ENCODE measurements at regions of chr10 and their contacts with region 1.

Region 1: DNA sequence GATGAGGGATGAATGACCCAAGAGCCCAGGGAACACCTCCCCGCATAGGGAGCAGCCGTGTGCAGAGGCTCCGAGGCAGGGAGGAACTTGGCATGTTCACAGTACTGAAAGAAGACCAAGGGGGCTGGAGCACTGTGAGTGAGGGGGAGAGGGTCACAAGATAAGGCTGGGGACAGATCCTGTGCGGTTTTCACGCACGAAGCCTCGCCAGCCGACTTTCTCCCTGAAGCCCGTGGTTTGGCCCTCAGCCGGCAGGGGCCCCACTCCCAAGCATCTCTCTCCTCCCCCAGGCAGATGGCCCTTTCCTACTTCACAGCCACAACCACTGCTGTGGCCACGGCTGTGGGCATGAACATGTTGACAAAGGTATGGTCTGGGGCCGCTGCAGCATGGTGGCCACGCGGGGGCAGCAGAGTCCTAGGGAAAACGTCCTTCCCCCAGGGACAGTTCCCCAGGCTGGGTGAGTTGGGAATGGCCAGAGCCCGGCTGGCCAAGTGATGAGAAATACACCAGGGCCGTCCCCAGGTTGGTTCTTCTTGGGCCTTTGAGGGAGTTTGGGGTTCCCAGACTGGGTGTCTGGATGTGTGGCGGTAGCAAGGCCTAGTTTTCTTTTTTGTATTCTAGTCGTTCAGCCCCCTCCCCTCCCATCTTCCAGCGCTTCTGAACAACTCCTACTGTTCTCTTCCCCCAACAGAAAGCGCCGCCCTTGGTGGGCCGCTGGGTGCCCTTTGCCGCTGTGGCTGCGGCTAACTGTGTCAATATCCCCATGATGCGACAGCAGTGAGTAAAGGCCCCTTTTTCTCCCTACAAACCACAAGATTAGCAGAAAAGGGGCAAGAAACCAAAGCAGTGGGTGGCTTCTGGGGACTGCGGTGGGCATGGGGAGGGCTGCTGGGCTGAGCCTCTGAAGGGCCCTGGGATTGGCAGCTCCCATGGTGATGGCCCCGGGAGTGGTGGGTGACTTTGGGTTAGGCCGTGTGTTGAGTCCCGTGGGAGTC is 14.4 kb upstream of the WBP1L start:
- DNase-seq: peak; percentile 19 to 72 (median 58)
- ATAC-seq: peak; percentile 58
- H3K4me3 ChIP-seq: no peak overlapping the region
- H3K4me3 Mint-ChIP-seq: no peak overlapping the region
- H3K27ac ChIP-seq: no peak overlapping the region
- H3K27ac Mint-ChIP-seq: no peak overlapping the region
- H3K4me1 ChIP-seq: no peaks in the 10 kb centered on the region
- H3K4me1 Mint-ChIP-seq: peaks cover 5% of the 10 kb centered on the region
- H3K27me3 ChIP-seq: no peaks in the 10 kb centered on the region
- H3K27me3 Mint-ChIP-seq: no peaks in the 10 kb centered on the region
- CTCF ChIP-seq: peak; percentile 66

Region 2: DNA sequence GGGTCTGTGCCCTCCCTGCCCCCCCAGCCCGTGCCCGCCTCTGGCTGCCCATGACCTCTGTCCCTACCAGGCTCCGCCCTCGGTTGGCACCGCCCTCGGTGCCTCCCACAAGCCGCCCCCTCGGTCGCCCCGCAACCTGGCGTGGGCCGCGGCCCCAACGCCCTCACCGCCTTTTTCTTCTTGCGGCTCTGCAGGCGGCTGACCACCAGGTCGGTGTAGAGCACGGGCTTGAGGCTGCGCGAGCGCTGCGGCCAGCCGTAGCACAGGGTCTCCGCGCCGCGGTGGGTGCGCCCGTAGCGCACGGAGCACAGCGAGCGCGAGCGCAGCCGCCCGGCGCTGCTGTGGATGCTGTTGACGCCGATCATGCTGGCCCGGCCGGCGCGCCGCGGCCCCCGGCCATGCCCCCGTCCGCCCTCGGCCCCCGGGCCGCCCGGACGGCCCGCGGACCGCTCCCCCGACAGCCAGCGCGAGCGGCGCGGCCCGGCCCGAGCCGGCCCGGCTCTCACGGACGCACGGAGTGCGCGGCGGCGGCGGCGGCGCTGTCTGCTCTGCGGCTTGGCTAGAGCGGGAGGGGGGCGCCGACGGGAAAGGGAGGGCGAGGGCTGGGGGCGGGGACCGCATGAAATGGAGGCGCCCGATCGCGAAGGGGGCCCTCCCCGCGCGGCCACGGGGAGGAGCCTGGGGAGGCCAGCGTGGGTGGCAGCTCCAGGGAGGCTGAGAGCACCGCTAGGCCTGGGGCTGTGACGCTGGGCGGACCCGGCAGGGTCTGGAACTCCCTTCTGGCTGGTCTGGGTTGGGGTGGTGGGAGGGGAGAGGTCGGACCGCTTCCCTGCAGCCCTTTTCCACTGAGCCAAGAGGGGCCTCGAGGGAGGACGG is 320.4 kb before region 1 on chr10:
- CTCF ChIA-PET with region 1: no interaction called
- POLR2A ChIA-PET with region 1: no interaction called
- intact Hi-C with region 1: no loop called
- DNase-seq: peak; percentile 49 to 86 (median 79)
- ATAC-seq: peak; percentile 72
- H3K4me3 ChIP-seq: peak overlapping the region; percentile 39 to 68
- H3K4me3 Mint-ChIP-seq: peak overlapping the region; percentile 83
- H3K27ac ChIP-seq: peak overlapping the region; percentile 31 to 43
- H3K27ac Mint-ChIP-seq: peak overlapping the region; percentile 91
- H3K4me1 ChIP-seq: peaks cover 36% of the 10 kb centered on the region
- H3K4me1 Mint-ChIP-seq: peaks cover 37% of the 10 kb centered on the region
- H3K27me3 ChIP-seq: peaks cover 0 to 26% of the 10 kb centered on the region in 2 experiments
- H3K27me3 Mint-ChIP-seq: peaks cover 17% of the 10 kb centered on the region
- CTCF ChIP-seq: no peak

Region 3: GRCh38 chr10:102604379-102604960 is 124.9 kb before region 1 on chr10:
- CTCF ChIA-PET with region 1: no interaction called
- POLR2A ChIA-PET with region 1: no interaction called
- intact Hi-C with region 1: no loop called
- DNase-seq: no peak
- ATAC-seq: no peak
- H3K4me3 ChIP-seq: no peak overlapping the region
- H3K4me3 Mint-ChIP-seq: no peak overlapping the region
- H3K27ac ChIP-seq: no peak overlapping the region
- H3K27ac Mint-ChIP-seq: no peak overlapping the region
- H3K4me1 ChIP-seq: no peaks in the 10 kb centered on the region
- H3K4me1 Mint-ChIP-seq: no peaks in the 10 kb centered on the region
- H3K27me3 ChIP-seq: no peaks in the 10 kb centered on the region
- H3K27me3 Mint-ChIP-seq: no peaks in the 10 kb centered on the region
- CTCF ChIP-seq: no peak

Region 4: DNA sequence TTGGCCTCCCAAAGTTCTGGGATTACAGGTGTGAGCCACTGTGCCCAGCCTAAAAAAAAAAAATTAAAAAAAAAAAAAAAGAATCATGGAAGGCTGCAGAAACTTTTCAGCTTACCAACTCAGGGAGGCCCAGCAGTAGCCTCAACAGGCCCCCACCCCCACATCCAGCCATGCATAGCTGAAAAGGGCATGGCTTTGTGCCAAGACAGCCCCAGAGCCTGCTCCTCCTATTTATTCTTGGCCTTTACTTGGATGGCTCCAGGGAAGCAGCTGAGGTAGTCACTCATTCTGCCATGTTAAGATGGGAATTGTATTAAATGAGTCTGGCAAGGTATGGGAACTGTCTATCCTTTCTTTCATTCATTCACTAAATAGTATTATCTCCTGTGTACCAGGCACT is 175.0 kb after region 1 on chr10:
- CTCF ChIA-PET with region 1: interaction called, 5 read pairs
- POLR2A ChIA-PET with region 1: no interaction called
- intact Hi-C with region 1: loop called in 1 of 2 experiments (anchors 2 kb)
- DNase-seq: no peak
- ATAC-seq: no peak
- H3K4me3 ChIP-seq: no peak overlapping the region
- H3K4me3 Mint-ChIP-seq: no peak overlapping the region
- H3K27ac ChIP-seq: no peak overlapping the region
- H3K27ac Mint-ChIP-seq: no peak overlapping the region
- H3K4me1 ChIP-seq: no peaks in the 10 kb centered on the region
- H3K4me1 Mint-ChIP-seq: no peaks in the 10 kb centered on the region
- H3K27me3 ChIP-seq: no peaks in the 10 kb centered on the region
- H3K27me3 Mint-ChIP-seq: no peaks in the 10 kb centered on the region
- CTCF ChIP-seq: no peak

Region 5: GRCh38 chr10:103069453-103070331 is 340.4 kb after region 1 on chr10:
- CTCF ChIA-PET with region 1: no interaction called
- POLR2A ChIA-PET with region 1: no interaction called
- intact Hi-C with region 1: loop called in 1 of 2 experiments (anchors 2 kb)
- DNase-seq: peak; percentile 45 to 85 (median 75)
- ATAC-seq: peak; percentile 96
- H3K4me3 ChIP-seq: no peak overlapping the region
- H3K4me3 Mint-ChIP-seq: peak overlapping the region; percentile 26
- H3K27ac ChIP-seq: peak overlapping the region in 1 of 2 experiments; percentile 21
- H3K27ac Mint-ChIP-seq: peak overlapping the region; percentile 66
- H3K4me1 ChIP-seq: peaks cover 20% of the 10 kb centered on the region
- H3K4me1 Mint-ChIP-seq: peaks cover 27% of the 10 kb centered on the region
- H3K27me3 ChIP-seq: no peaks in the 10 kb centered on the region
- H3K27me3 Mint-ChIP-seq: no peaks in the 10 kb centered on the region
- CTCF ChIP-seq: peak; percentile 75

Region 6: DNA sequence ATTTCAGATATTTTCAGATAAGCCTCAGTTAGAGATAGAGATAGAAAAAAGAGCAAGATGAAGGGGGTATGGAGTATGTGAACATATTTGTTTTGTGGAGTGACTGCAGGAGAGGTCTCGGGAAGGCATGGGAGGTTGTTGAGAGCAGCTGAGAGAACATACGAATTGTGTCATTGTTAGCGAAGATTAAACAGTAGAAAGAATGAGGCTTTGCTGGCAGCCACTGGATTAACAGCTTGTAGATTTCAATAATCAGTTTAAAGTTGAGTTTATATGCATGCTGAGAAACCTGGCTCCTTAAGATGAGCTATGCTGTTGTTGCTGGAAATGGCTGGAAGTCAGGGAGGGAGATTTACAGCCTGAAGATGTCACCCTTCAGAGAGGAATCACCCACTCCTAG is 1810.9 kb after region 1 on chr10:
- CTCF ChIA-PET with region 1: no interaction called
- POLR2A ChIA-PET with region 1: no interaction called
- intact Hi-C with region 1: no loop called
- DNase-seq: no peak
- ATAC-seq: no peak
- H3K4me3 ChIP-seq: no peak overlapping the region
- H3K4me3 Mint-ChIP-seq: no peak overlapping the region
- H3K27ac ChIP-seq: no peak overlapping the region
- H3K27ac Mint-ChIP-seq: no peak overlapping the region
- H3K4me1 ChIP-seq: no peaks in the 10 kb centered on the region
- H3K4me1 Mint-ChIP-seq: no peaks in the 10 kb centered on the region
- H3K27me3 ChIP-seq: no peaks in the 10 kb centered on the region
- H3K27me3 Mint-ChIP-seq: peaks cover 46% of the 10 kb centered on the region
- CTCF ChIP-seq: no peak

Measured in CD8-positive, alpha-beta T cell (primary cell).